Psoas muscle (tissue), 8 donors: ENCODE measurements at regions of chr6 and their contacts with region 1.

Region 1: DNA sequence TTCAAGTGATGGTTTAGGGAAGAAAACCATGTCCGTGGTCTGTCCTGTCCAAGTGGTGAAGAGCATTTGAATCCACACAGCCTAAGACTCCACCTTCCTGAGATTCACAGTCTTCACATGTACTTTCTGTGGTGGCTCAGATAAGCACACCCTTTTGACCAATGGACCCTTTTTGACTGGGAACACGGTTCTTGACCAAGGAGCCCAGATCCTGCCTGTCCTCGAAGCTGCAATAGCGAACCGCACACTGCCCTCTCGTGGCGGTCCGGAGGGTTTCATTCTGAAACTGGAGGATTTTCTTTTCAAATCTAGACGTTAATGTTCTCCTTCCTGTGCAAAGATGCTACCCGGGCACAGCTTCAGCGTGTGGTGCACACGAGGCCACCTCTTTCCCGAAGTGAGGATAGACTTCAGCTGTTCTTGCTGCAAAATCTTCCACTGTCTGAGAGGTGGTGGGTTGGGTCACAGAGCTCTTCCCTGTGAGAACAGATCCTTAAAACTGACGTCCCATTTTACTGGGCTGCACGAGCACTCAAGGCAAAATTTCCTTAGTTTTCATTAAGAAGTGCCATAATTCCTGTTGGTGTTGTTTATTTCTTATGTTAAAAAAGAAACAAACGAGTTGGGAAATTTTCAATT is 90.5 kb downstream of the SYNJ2 start:
- DNase-seq: peak; percentile 72 to 87
- ATAC-seq: peak; percentile 73 to 83 (median 79)
- H3K4me3 ChIP-seq: no peak overlapping the region
- H3K27ac ChIP-seq: no peak overlapping the region
- H3K4me1 ChIP-seq: peaks cover 5% of the 10 kb centered on the region
- H3K27me3 ChIP-seq: no peaks in the 10 kb centered on the region
- CTCF ChIP-seq: peak; percentile 84

Region 2: GRCh38 chr6:156427345-156427744 is 1644.9 kb before region 1 on chr6:
- intact Hi-C with region 1: no loop called
- DNase-seq: peak in 1 of 2 donors; percentile 43
- ATAC-seq: peak in 3 of 4 donors; percentile 37 to 45 (median 37)
- H3K4me3 ChIP-seq: no peak overlapping the region
- H3K27ac ChIP-seq: no peak overlapping the region
- H3K4me1 ChIP-seq: no peaks in the 10 kb centered on the region
- H3K27me3 ChIP-seq: no peaks in the 10 kb centered on the region
- CTCF ChIP-seq: no peak

Region 3: GRCh38 chr6:157756708-157757429 is 315.3 kb before region 1 on chr6:
- intact Hi-C with region 1: loop called in 1 of 2 experiments (anchors 10 kb)
- DNase-seq: peak; percentile 89 to 92
- ATAC-seq: peak; percentile 86 to 97 (median 92)
- H3K4me3 ChIP-seq: peak overlapping the region; percentile 37
- H3K27ac ChIP-seq: no peak overlapping the region
- H3K4me1 ChIP-seq: peaks cover 9% of the 10 kb centered on the region
- H3K27me3 ChIP-seq: no peaks in the 10 kb centered on the region
- CTCF ChIP-seq: peak; percentile 78

Region 4: GRCh38 chr6:157981395-157982296 is 90.6 kb before region 1 on chr6 and contains the start of gene SYNJ2:
- intact Hi-C with region 1: loop called (anchors 2 kb)
- DNase-seq: peak; percentile 77 to 89
- ATAC-seq: peak; percentile 84 to 93 (median 90)
- H3K4me3 ChIP-seq: peak within 1 kb of the TSS; percentile 97
- H3K27ac ChIP-seq: peak within 1 kb of the TSS; percentile 71
- H3K4me1 ChIP-seq: peaks cover 10% of the 10 kb centered on the region
- H3K27me3 ChIP-seq: no peaks in the 10 kb centered on the region
- CTCF ChIP-seq: peak; percentile 49
- total RNA-seq, gene SYNJ2: 2.6 to 30.2 (median 12.4) TPM

Region 5: DNA sequence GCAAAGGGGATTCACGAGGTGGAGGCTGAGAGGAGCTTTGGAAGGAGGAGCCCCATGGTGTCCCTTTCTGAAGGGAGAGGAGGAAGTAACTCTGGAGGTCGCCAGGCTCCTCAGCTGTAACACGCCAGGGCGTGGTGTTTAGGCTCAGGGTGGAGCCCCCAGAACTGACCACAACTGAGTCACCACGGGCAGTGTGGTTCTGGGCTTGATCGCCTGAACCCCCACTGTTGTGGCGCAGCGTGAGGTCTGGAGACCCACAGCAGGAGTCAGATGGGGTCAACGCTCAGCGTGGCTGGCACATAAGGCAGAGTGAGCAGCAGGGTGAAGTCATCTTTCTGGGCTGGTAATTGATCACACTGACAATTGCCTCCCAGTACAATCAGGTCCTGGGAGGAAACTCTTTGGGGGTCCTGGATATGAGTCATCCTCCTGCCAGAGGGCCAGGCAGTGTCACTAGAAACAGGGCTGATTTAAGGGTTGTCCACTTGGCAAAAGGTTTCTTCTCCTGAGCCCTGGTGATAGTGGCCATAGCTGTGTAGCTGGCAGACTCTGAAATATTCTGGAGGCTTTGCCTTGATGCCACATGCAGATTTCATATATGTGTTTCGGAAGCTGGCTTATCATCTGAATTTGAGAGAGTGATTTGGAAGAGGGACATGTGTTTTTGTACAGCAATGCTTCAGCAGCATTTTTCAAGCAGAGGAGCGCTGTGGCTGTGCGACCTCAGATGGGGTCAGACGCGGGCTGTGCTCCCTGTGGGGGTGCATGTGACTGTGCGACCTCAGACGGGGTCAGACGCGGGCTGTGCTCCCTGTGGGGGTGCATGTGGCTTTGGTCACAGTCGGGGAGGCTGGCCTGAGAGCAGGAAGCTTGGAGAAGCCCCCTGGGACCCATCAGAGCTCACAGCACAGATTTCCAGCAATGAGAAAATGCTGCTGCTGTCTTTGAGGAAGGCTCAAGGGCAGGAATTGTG is 40.5 kb before region 1 on chr6:
- intact Hi-C with region 1: loop called in 1 of 2 experiments (anchors 5 kb)
- DNase-seq: peak; percentile 70 to 84
- ATAC-seq: peak; percentile 43 to 70 (median 63)
- H3K4me3 ChIP-seq: no peak overlapping the region
- H3K27ac ChIP-seq: peak overlapping the region; percentile 23
- H3K4me1 ChIP-seq: peaks cover 18% of the 10 kb centered on the region
- H3K27me3 ChIP-seq: no peaks in the 10 kb centered on the region
- CTCF ChIP-seq: no peak